ENCODE measurements at regions of chr4 and their contacts with region 1.

Region 1: DNA sequence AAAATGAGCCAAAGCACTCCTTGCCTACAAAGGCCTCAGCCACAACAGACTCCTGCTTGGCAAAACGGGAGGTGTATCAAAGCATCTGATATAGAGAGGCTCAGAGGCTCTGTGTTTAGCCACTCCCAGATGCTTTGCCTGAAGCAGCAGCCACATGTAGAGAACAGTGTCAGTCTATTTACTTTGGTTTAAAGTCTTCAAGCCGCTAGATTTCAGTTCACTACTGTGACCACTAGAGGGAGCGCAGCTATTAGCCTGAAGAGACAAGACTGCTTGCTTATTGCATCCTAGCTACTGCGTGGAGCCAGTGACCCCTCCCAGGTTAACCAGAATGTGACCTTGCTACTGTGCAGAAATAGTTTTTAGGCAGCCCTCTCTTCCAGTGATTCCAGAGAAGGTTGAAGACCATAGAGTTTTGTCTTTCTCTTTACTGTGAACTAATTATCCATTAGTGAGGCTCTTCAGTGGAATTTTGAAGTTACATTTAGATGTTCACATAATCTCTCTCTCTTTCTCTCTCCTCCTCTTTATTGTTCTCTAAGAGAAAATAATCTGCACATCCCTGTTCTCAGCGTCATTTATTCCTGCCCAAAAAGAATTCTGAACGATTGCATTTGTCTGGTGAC is 39.3 kb downstream of the BMP3 start:
- DNase-seq: peak; percentile 58
- H3K4me3 Mint-ChIP-seq: no peak overlapping the region
- H3K27ac Mint-ChIP-seq: no peak overlapping the region
- H3K4me1 Mint-ChIP-seq: no peaks in the 10 kb centered on the region
- H3K27me3 Mint-ChIP-seq: peaks cover 10% of the 10 kb centered on the region

Region 2: DNA sequence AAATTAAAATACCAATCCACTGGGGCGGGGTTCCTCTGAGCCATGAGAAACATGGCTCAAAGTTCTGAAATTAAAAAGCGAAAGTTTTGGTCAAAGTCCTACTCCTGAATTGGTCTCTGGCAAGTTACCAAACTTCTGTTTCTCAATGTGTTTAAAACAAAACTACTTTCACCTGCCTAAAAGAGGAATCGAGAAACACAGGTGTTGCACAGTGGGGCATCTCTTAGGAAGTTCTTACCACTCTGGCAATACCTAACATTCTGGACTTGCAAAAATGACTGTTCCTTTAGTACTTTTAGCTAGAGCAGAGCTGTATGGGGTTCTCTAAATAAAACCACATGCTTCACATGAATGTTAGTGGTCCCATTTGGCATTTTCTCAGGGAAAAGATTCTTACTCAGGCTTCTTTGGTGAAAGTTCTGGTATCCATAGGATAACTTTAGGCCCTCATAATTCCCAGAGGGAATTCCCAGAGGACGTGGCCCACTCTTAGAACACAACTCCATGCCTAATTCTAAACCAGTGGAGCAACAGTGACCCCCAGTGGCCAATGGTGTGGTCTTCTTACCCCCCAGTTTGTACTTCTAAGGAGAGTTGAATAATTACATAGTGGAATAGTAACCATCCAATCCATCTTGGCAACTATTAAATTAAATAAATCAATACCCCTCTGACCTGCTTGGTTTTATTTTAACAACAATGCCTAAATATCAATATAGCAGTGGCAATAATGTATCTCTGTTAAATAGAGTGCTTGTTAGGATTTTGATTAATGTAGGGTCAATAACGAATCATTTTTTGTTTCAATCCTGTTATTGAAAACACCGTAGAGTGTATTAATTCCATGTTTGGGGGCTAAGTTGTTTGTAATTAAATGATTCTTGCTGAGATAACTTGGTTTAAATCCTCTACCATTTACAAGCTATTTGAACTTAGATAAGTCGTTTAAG is 17.4 kb before region 1 on chr4:
- CTCF ChIA-PET with region 1: interaction called, 19 read pairs
- POLR2A ChIA-PET with region 1: no interaction called
- intact Hi-C with region 1: no loop called
- DNase-seq: peak; percentile 51
- H3K4me3 Mint-ChIP-seq: no peak overlapping the region
- H3K27ac Mint-ChIP-seq: no peak overlapping the region
- H3K4me1 Mint-ChIP-seq: no peaks in the 10 kb centered on the region
- H3K27me3 Mint-ChIP-seq: peaks cover 2% of the 10 kb centered on the region

Region 3: GRCh38 chr4:81084029-81084428 is 14.2 kb after region 1 on chr4:
- CTCF ChIA-PET with region 1: interaction called, 11 read pairs
- POLR2A ChIA-PET with region 1: no interaction called
- intact Hi-C with region 1: no loop called
- DNase-seq: no peak
- H3K4me3 Mint-ChIP-seq: no peak overlapping the region
- H3K27ac Mint-ChIP-seq: no peak overlapping the region
- H3K4me1 Mint-ChIP-seq: no peaks in the 10 kb centered on the region
- H3K27me3 Mint-ChIP-seq: peaks cover 2% of the 10 kb centered on the region

Region 4: DNA sequence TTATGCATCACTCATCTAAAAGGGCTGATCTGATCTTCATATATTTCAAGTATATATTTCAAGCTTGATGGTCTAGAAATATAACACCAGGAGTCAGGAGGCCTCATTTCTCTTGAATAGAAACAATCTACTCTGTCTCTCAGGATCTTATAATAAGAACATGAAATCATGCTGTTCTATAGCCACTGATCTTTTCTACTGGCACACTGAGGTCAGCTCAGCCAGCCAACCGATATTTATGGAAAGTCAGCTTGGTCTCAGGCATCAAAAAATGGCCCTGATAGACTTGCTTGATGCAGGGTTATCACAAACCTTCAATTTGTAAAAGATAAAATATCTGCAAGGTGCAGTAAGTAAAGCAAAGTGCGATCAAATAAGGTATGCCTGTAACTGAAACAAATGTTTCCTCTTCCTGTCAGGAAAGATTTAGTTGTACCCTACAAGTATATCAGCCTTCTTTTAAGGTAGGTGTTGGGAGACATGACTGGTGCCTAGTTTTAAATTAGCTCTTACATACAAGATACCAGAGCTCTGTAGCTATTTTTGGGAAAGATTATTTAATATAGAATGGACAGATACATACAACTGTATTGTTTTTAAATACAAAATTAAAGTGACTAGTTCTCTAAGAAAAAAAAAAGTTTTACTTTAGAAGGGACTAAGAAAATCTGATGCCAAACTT is 24.0 kb after region 1 on chr4:
- CTCF ChIA-PET with region 1: interaction called, 11 read pairs
- POLR2A ChIA-PET with region 1: no interaction called
- intact Hi-C with region 1: no loop called
- DNase-seq: no peak
- H3K4me3 Mint-ChIP-seq: no peak overlapping the region
- H3K27ac Mint-ChIP-seq: no peak overlapping the region
- H3K4me1 Mint-ChIP-seq: no peaks in the 10 kb centered on the region
- H3K27me3 Mint-ChIP-seq: no peaks in the 10 kb centered on the region

Region 5: DNA sequence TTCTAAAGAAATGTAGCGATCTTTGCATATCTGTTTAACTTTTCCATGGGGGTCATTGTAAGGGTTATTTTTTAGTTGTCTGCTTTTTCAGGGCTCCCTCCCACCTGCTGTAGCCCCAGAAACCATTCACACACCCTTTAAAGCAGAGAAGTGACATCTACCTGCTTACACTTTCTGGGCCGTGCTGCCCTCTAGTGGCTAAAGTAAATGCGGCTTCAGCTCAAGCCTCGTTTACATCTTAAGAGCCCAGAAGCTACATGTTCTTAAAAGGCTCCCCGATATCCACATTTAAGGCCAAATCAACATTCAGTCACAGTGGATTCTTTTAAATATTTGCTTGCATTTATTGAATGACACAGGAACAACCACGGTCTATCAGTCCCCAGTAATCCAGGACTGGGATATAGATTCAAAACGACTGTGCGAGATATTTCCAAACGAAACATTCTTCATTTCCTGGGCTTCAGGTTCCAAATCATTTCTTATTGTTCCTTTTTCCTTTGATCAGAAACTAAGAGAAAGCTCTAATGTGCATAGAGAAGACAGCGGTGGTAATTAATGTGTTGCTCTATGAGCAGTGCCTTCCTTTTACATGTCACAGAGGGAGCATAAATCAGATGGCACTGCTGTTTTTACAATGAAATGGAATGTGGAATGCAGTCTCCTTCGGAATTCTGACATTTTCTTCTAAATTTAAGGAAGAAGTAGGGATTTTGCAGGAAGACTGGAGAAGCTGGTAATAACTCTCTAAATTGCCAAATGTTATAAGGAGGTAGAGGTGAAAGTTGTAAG is 282.0 kb after region 1 on chr4:
- CTCF ChIA-PET with region 1: interaction called, 54 read pairs
- POLR2A ChIA-PET with region 1: no interaction called
- intact Hi-C with region 1: loop called (anchors 1 kb)
- DNase-seq: peak; percentile 75
- H3K4me3 Mint-ChIP-seq: no peak overlapping the region
- H3K27ac Mint-ChIP-seq: no peak overlapping the region
- H3K4me1 Mint-ChIP-seq: no peaks in the 10 kb centered on the region
- H3K27me3 Mint-ChIP-seq: peaks cover 3% of the 10 kb centered on the region